ENCODE measurements at regions of chr18 and their contacts with region 1.

Region 1: GRCh38 chr18:45324495-45325113 is 290.7 kb upstream of the SLC14A2 start:
- DNase-seq: peak; percentile 62
- H3K4me3 ChIP-seq: no peak overlapping the region
- H3K27ac ChIP-seq: peak overlapping the region in 1 of 2 donors; percentile 10
- H3K4me1 ChIP-seq: no peaks in the 10 kb centered on the region
- H3K27me3 ChIP-seq: no peaks in the 10 kb centered on the region
- CTCF ChIP-seq: no peak
- POLR2A ChIP-seq: no peak

Region 2: GRCh38 chr18:45081566-45082181 is 242.9 kb before region 1 on chr18:
- intact Hi-C with region 1: loop called (anchors 5 kb)
- DNase-seq: no peak
- H3K4me3 ChIP-seq: no peak overlapping the region
- H3K27ac ChIP-seq: no peak overlapping the region
- H3K4me1 ChIP-seq: no peaks in the 10 kb centered on the region
- H3K27me3 ChIP-seq: no peaks in the 10 kb centered on the region
- CTCF ChIP-seq: no peak
- POLR2A ChIP-seq: no peak

Region 3: DNA sequence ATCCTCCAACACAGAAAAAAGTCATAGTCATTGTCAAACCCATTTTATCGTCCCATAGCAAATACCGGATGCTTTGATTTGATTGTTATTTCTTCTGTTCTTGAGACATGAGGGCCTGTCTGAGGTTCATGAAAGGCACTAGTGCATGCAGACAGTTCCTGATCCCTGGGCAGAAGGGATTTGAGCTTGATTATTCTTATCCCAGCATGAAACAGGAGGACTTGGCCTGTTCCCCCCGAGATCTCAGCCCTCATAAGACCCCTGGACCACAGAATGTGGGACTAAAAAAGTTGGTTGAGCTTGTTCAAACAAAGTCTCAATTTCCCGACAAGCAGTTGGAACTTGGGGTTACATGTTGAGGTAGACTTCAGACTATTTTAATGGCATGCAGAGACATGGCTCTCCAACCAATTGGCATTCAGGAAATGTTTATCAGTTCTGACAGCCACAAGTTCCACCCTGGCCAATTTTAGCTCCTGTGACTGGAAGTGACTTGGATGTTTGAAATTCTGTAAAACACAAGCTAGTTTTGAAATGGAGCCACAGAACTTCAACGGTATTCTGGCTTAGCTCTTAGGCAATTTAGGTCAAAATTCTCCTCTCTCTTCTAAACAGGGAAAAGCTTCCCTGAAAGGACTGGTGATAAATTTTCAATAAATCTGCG is 76.2 kb before region 1 on chr18:
- intact Hi-C with region 1: loop called (anchors 5 kb)
- DNase-seq: peak; percentile 51
- H3K4me3 ChIP-seq: no peak overlapping the region
- H3K27ac ChIP-seq: peak overlapping the region; percentile 14 to 36
- H3K4me1 ChIP-seq: no peaks in the 10 kb centered on the region
- H3K27me3 ChIP-seq: no peaks in the 10 kb centered on the region
- CTCF ChIP-seq: no peak
- POLR2A ChIP-seq: no peak

Region 4: DNA sequence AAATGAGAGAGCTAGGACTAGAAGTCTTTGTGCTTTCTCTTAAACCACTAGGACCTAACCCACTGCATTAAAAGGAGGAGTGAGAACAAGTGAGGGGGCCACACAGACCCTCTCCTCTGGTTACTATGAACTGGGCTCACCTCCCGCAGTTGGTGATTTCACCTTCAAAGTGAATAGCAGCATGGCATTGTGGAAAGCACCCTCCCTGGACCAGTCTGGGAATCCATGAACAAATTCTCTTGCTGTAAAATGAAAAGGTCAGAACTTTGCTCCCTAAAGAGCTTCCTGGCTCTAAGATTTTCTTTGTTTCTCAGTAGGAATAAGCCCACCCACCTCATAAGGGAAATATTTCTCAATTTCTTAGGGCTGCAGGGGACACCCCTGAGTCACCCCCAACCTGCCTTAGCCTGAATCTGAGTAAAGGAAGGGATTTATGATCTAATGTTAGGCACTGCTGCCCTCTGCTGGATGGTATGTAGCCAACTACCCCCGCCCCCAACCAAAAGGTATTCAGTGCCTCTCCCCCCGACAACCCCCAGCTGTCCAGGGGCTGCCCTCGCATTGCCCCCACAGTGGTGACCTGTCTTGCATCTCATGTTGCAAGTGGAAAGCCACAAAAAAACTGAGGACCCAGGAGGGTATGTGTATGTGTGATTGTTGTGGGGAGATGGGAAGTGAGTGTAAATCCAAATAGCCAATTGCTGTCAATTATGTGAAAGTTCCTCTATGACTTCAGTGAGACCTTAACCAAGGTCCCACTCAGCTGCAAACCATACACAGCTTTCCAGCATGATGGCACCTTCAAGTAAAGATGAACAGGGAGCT is 59.7 kb after region 1 on chr18:
- intact Hi-C with region 1: loop called (anchors 5 kb)
- DNase-seq: peak; percentile 38
- H3K4me3 ChIP-seq: no peak overlapping the region
- H3K27ac ChIP-seq: no peak overlapping the region
- H3K4me1 ChIP-seq: no peaks in the 10 kb centered on the region
- H3K27me3 ChIP-seq: no peaks in the 10 kb centered on the region
- CTCF ChIP-seq: peak; percentile 48 to 69 (median 60)
- POLR2A ChIP-seq: no peak

Region 5: GRCh38 chr18:45416168-45416567 is 91.6 kb after region 1 on chr18:
- intact Hi-C with region 1: no loop called
- DNase-seq: peak; percentile 61
- H3K4me3 ChIP-seq: no peak overlapping the region
- H3K27ac ChIP-seq: no peak overlapping the region
- H3K4me1 ChIP-seq: no peaks in the 10 kb centered on the region
- H3K27me3 ChIP-seq: no peaks in the 10 kb centered on the region
- CTCF ChIP-seq: no peak
- POLR2A ChIP-seq: no peak

Region 6: DNA sequence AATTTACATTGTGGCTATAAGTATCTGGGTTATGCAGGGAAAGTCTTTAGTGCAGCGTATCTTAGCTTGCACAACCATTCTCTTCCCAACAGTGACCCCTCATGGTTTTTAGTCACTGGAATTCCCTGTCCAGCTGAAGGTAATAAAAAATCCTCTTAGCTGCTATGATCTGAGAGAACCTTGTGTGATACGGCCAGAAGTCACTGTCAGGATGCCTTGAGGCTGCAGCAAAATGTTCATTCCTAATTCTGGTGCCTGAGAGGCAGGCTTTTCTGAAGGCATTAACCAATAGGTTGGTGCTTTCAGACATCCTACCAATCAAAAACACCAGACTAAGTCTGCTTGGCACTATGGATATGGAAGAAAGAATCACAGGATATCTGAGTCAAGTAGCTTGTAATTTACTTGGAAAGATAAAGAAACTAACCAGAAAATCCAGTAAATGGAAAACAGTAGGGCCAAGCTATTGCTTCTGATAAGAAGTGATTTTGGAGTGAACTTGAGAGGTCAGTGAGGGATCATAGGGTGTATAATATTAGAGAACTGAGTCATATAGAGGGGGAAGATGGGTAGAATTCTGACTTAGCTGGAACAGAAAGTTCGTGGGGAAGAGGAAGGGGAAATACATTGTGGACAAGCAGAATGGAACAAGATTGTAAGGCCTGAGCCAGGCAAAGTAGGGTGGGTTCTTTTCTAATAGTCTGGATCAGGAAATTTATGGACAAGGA is 201.7 kb after region 1 on chr18:
- intact Hi-C with region 1: loop called (anchors 10 kb)
- DNase-seq: no peak
- H3K4me3 ChIP-seq: no peak overlapping the region
- H3K27ac ChIP-seq: peak overlapping the region in 1 of 2 donors; percentile 11
- H3K4me1 ChIP-seq: no peaks in the 10 kb centered on the region
- H3K27me3 ChIP-seq: no peaks in the 10 kb centered on the region
- CTCF ChIP-seq: peak in 1 of 4 experiments; percentile 20
- POLR2A ChIP-seq: no peak

Region 7: GRCh38 chr18:45637546-45638327 is 313.1 kb after region 1 on chr18:
- intact Hi-C with region 1: loop called (anchors 10 kb)
- DNase-seq: no peak
- H3K4me3 ChIP-seq: no peak overlapping the region
- H3K27ac ChIP-seq: peak overlapping the region; percentile 63 to 67
- H3K4me1 ChIP-seq: no peaks in the 10 kb centered on the region
- H3K27me3 ChIP-seq: no peaks in the 10 kb centered on the region
- CTCF ChIP-seq: no peak
- POLR2A ChIP-seq: no peak